Activated CD4-positive, alpha-beta T cell treated with anti-CD3 and anti-CD28 coated beads for 36 hours (primary cell): ENCODE measurements at regions of chr22 and their contacts with region 1.

Region 1: GRCh38 chr22:41381329-41382097 is at the start of gene TEF:
- DNase-seq: peak; percentile 98
- ATAC-seq: peak; percentile 94
- H3K4me3 Mint-ChIP-seq: peak within 1 kb of the TSS; percentile 79
- H3K27ac Mint-ChIP-seq: peak within 1 kb of the TSS; percentile 91
- H3K4me1 Mint-ChIP-seq: peaks cover 10% of the 10 kb centered on the region
- H3K27me3 Mint-ChIP-seq: no peaks in the 10 kb centered on the region
- total RNA-seq, gene TEF: 1.7 to 2.2 TPM

Region 2: GRCh38 chr22:41022470-41023298 is 358.8 kb before region 1 on chr22:
- CTCF ChIA-PET with region 1: no interaction called
- POLR2A ChIA-PET with region 1: no interaction called
- intact Hi-C with region 1: loop called in 1 of 2 experiments (anchors 2 kb)
- DNase-seq: peak; percentile 91
- ATAC-seq: peak; percentile 80
- H3K4me3 Mint-ChIP-seq: peak overlapping the region; percentile 91
- H3K27ac Mint-ChIP-seq: peak overlapping the region; percentile 86
- H3K4me1 Mint-ChIP-seq: peaks cover 14% of the 10 kb centered on the region
- H3K27me3 Mint-ChIP-seq: peaks cover 2% of the 10 kb centered on the region

Region 3: GRCh38 chr22:41285820-41286638 is 95.5 kb before region 1 on chr22 and contains the start of gene RANGAP1:
- CTCF ChIA-PET with region 1: no interaction called
- POLR2A ChIA-PET with region 1: interaction called, 13 read pairs
- intact Hi-C with region 1: loop called in 1 of 2 experiments (anchors 1 kb)
- DNase-seq: peak; percentile 99
- ATAC-seq: peak; percentile 94
- H3K4me3 Mint-ChIP-seq: peak within 1 kb of the TSS; percentile 88
- H3K27ac Mint-ChIP-seq: peak within 1 kb of the TSS; percentile 97
- H3K4me1 Mint-ChIP-seq: peaks cover 33% of the 10 kb centered on the region
- H3K27me3 Mint-ChIP-seq: no peaks in the 10 kb centered on the region
- total RNA-seq, gene RANGAP1: 140 to 157 TPM

Region 4: GRCh38 chr22:41403532-41404318 is 22.2 kb after region 1 on chr22:
- CTCF ChIA-PET with region 1: interaction called, 16 read pairs
- POLR2A ChIA-PET with region 1: interaction called, 4 read pairs
- intact Hi-C with region 1: no loop called
- DNase-seq: peak; percentile 93
- ATAC-seq: peak; percentile 99
- H3K4me3 Mint-ChIP-seq: no peak overlapping the region
- H3K27ac Mint-ChIP-seq: no peak overlapping the region
- H3K4me1 Mint-ChIP-seq: peaks cover 17% of the 10 kb centered on the region
- H3K27me3 Mint-ChIP-seq: no peaks in the 10 kb centered on the region

Region 5: DNA sequence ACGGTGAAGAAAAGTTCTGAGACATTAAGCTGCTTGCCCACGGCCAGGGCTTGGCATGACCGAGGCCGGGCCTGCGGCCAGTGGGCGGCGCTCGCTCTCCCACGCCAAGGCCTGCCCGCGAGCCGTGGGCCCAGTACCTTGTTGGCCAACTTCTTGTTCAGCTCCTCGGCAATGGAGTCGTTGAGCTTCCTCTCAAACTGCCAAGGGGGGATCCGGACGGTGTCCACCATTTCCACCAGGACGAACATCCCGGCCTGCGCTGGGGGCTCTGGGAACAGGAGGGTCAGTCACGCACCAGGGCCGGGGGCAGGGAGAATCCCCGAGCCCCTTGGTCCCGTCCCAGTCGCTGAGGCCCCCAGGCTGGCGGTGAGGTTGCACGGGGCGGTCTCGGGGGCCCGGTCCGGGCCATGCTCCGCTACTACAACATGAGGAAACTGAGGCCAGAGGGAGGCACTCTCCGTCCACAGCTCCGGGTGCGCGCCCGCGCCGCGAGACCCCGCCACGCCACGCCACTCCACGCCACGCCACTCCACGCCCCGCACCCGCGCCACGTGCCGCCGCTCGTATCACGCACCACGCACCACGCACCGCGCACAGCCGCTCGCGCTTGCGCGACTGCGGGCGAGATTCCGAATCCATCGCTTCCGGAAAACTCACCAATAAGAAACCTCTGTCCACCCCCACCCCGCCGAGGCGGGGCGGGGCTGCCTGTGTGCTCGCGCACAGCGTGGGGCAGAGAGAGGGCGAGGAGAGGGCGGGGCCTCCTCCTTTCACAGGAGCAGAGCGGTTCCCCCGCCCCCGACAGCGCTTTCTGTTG is 162.5 kb after region 1 on chr22 and contains the start of gene POLR3H:
- CTCF ChIA-PET with region 1: interaction called, 4 read pairs
- POLR2A ChIA-PET with region 1: no interaction called
- intact Hi-C with region 1: loop called in 1 of 2 experiments (anchors 1 kb)
- DNase-seq: peak; percentile 99
- ATAC-seq: peak; percentile 99
- H3K4me3 Mint-ChIP-seq: peak within 1 kb of the TSS; percentile 81
- H3K27ac Mint-ChIP-seq: peak within 1 kb of the TSS; percentile 90
- H3K4me1 Mint-ChIP-seq: peaks cover 40% of the 10 kb centered on the region
- H3K27me3 Mint-ChIP-seq: no peaks in the 10 kb centered on the region
- total RNA-seq, gene POLR3H: 18.3 to 24.6 TPM

Region 6: GRCh38 chr22:42500161-42500835 is 1118.8 kb after region 1 on chr22:
- CTCF ChIA-PET with region 1: no interaction called
- POLR2A ChIA-PET with region 1: no interaction called
- intact Hi-C with region 1: loop called in 1 of 2 experiments (anchors 5 kb)
- DNase-seq: peak; percentile 91
- ATAC-seq: peak; percentile 98
- H3K4me3 Mint-ChIP-seq: peak overlapping the region; percentile 38
- H3K27ac Mint-ChIP-seq: no peak overlapping the region
- H3K4me1 Mint-ChIP-seq: peaks cover 11% of the 10 kb centered on the region
- H3K27me3 Mint-ChIP-seq: no peaks in the 10 kb centered on the region